Colonic mucosa (tissue), 4 donors: ENCODE measurements at regions of chr15 and their contacts with region 1.

Region 1: DNA sequence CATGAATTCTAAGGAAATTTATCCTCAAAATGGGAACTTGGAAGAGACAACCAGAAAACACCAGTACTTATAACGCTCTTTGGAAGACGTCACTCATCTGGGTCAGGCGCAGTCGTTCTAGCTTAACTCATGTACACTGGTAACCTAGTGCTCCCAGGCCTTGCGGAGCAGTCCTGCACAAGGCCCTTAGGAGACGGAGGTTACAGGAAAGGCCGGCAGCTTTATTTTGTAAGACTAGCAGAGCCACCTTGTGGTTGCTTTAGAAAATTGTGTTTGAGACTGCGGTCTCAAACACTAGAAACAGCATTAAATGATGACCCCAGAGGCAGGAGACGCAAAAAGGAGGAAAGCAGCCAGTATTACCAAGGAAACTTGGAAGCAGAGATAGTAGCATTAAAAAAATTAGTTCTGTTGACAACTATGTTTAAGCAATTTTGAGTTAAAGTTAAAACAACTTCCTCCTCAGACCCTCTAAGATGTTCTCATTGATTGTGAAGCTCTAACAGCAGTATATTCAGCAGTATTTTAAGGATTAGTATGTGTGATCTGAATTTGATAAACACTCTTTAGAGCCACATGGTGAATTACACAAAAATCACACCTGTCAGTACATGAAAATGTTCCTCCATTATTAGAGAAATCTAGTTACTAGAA is 141.9 kb upstream of the C2CD4B start:
- DNase-seq: peak; percentile 53
- H3K4me3 ChIP-seq: no peak overlapping the region
- H3K27ac ChIP-seq: no peak overlapping the region
- H3K4me1 ChIP-seq: no peaks in the 10 kb centered on the region
- H3K27me3 ChIP-seq: no peaks in the 10 kb centered on the region
- CTCF ChIP-seq: peak; percentile 50

Region 2: GRCh38 chr15:61871926-61872522 is 435.0 kb before region 1 on chr15:
- intact Hi-C with region 1: loop called (anchors 5 kb)
- DNase-seq: no peak
- H3K4me3 ChIP-seq: no peak overlapping the region
- H3K27ac ChIP-seq: no peak overlapping the region
- H3K4me1 ChIP-seq: no peaks in the 10 kb centered on the region
- H3K27me3 ChIP-seq: no peaks in the 10 kb centered on the region
- CTCF ChIP-seq: peak; percentile 52

Region 3: GRCh38 chr15:62071711-62072308 is 235.2 kb before region 1 on chr15:
- intact Hi-C with region 1: loop called (anchors 10 kb)
- DNase-seq: no peak
- H3K4me3 ChIP-seq: no peak overlapping the region
- H3K27ac ChIP-seq: no peak overlapping the region
- H3K4me1 ChIP-seq: peaks cover 7% of the 10 kb centered on the region
- H3K27me3 ChIP-seq: no peaks in the 10 kb centered on the region
- CTCF ChIP-seq: peak; percentile 65

Region 4: DNA sequence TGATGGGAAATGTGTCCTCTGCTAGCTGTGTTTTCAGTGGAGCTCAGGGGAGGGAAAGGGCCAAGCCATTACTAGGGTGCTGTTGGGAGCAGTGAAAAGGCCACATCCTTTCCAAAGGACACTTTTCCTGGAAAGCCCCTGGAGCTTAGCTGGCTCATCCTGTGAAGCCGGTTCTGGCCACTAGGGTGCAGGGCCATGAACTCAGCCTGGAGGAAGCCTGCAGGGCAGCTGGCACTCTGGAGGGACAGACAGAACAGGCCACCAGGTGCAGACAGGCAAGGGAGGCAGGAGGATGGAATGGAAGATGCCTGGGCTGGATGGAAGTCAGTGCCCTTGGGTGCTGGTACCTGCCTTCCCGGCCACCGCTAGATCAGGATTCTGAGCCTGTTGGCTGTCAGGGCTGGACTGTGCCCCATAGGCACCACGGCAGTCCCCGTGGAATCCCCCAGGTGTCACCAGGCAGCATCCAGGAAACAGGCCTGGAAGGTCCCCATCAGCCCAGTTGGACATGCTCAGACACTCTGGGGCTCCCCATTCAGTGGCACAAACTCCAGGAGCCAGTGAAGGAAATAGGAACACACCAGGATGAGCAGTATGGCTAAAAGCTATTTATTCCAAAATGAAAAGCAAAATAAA is 65.7 kb before region 1 on chr15:
- intact Hi-C with region 1: no loop called
- DNase-seq: peak; percentile 31
- H3K4me3 ChIP-seq: no peak overlapping the region
- H3K27ac ChIP-seq: no peak overlapping the region
- H3K4me1 ChIP-seq: no peaks in the 10 kb centered on the region
- H3K27me3 ChIP-seq: no peaks in the 10 kb centered on the region
- CTCF ChIP-seq: peak; percentile 43

Region 5: DNA sequence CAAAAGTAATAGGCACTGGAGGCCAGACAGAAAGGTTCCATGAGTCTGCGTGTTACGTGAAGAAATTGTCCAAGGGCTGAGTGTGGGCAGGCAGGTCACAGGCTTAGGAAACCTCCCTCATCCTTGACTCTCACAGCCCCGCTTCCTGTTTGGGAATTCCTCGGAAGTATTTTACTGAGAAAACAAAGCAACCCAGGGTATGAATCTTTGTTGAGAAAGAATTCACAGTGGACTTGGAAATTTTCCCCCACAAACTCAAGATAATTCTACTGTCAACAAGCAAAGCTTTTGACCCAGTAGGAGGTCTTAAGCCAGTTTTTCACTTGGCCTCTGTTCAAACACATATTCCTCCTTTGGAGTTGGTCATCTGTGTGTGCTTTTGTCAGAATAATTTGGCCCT is 358.5 kb after region 1 on chr15:
- intact Hi-C with region 1: no loop called
- DNase-seq: no peak
- H3K4me3 ChIP-seq: no peak overlapping the region
- H3K27ac ChIP-seq: no peak overlapping the region
- H3K4me1 ChIP-seq: no peaks in the 10 kb centered on the region
- H3K27me3 ChIP-seq: no peaks in the 10 kb centered on the region
- CTCF ChIP-seq: no peak